Naive thymus-derived CD4-positive, alpha-beta T cell (primary cell): ENCODE measurements at regions of chr11 and their contacts with region 1.

Region 1: DNA sequence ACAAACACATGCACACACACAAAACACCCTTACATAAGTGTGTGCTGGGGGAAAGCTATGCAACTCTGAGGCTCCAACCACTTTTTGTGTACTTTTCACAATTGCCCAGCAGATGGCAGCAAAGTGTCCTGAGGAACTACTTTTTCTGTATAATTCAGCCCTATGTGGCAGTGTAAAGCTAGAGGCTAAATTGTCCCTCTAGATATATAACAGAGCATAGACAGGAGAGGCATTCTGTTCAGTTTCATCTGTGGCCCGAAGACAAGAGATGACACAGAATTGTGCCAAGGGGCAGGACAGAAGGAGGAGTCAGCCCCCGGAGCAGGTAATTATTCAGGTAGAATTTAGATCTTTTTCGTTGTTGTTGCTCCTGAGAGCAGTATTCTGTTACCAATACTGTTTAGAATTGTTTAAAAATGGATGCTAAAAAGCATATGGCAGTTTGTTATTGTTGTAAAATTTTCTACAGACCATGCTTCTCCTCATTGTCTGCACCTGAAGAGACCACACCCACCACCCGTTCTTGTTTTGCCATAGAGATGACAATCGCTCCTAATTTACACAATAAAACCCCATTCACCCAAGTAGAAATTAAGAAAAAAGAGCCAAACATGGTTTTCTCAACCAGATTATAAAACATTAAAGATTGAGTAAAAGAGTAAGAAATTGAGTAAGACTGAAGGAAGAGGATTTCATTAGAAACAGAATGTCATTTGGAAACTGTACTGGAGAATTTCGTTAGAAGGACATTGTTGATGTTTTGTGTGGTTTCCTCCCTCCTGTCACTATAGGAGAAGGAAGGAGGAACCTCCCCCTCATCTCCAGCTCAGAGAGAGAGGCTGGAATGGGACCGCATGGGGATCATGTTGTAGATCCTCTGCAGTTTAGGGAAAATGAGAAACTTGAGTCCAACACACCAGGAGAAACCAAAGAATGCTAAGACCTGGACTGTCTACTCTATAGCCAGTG is 14.5 kb upstream of the MS4A7 start:
- DNase-seq: peak in 8 of 9 donors; percentile 3 to 54 (median 41)
- ATAC-seq: peak; percentile 85
- H3K4me3 ChIP-seq: no peak overlapping the region
- H3K4me3 Mint-ChIP-seq: peak overlapping the region in 1 of 10 donors; percentile 4
- H3K27ac ChIP-seq: no peak overlapping the region
- H3K27ac Mint-ChIP-seq: no peak overlapping the region
- H3K4me1 ChIP-seq: no peaks in the 10 kb centered on the region
- H3K4me1 Mint-ChIP-seq: no peaks in the 10 kb centered on the region
- H3K27me3 ChIP-seq: no peaks in the 10 kb centered on the region
- H3K27me3 Mint-ChIP-seq: peaks cover 8 to 30% (median 23%) of the 10 kb centered on the region in 5 donors

Region 2: GRCh38 chr11:60348116-60348515 is 15.7 kb before region 1 on chr11:
- CTCF ChIA-PET with region 1: no interaction called
- POLR2A ChIA-PET with region 1: no interaction called
- intact Hi-C with region 1: no loop called
- DNase-seq: no peak
- ATAC-seq: no peak
- H3K4me3 ChIP-seq: no peak overlapping the region
- H3K4me3 Mint-ChIP-seq: no peak overlapping the region
- H3K27ac ChIP-seq: no peak overlapping the region
- H3K27ac Mint-ChIP-seq: no peak overlapping the region
- H3K4me1 ChIP-seq: no peaks in the 10 kb centered on the region
- H3K4me1 Mint-ChIP-seq: no peaks in the 10 kb centered on the region
- H3K27me3 ChIP-seq: no peaks in the 10 kb centered on the region
- H3K27me3 Mint-ChIP-seq: peaks cover 5 to 22% (median 15%) of the 10 kb centered on the region in 5 donors

Region 3: GRCh38 chr11:60485986-60486385 is 122.2 kb after region 1 on chr11:
- CTCF ChIA-PET with region 1: no interaction called
- POLR2A ChIA-PET with region 1: no interaction called
- intact Hi-C with region 1: loop called in 1 of 2 experiments (anchors 1 kb)
- DNase-seq: no peak
- ATAC-seq: peak; percentile 70
- H3K4me3 ChIP-seq: no peak overlapping the region
- H3K4me3 Mint-ChIP-seq: no peak overlapping the region
- H3K27ac ChIP-seq: no peak overlapping the region
- H3K27ac Mint-ChIP-seq: no peak overlapping the region
- H3K4me1 ChIP-seq: no peaks in the 10 kb centered on the region
- H3K4me1 Mint-ChIP-seq: peaks cover 0 to 8% (median 4%) of the 10 kb centered on the region in 7 donors
- H3K27me3 ChIP-seq: no peaks in the 10 kb centered on the region
- H3K27me3 Mint-ChIP-seq: peaks cover 0 to 13% (median 7%) of the 10 kb centered on the region in 5 donors

Region 4: DNA sequence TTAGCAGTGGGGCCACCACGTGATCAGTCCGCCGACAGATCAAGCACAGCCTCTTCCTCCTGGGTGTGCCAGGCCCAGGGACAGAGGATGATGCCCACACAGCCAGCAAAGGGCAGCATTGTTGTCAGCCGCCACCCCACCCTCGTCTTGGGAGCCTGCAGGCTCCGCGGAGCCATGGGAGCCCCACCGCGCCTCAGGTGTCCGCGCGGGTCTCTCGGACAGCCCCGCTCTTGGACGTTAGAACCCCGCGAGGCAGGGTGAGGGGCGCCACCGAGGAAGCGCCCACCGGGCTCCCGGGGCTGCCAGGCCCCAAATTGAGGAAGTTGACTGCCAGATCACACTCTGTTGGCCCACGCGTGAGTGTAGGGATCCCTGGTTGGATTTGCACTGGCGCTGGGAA is 251.7 kb after region 1 on chr11:
- CTCF ChIA-PET with region 1: interaction called, 4 read pairs
- POLR2A ChIA-PET with region 1: no interaction called
- intact Hi-C with region 1: loop called in 1 of 2 experiments (anchors 1 kb)
- DNase-seq: no peak
- ATAC-seq: no peak
- H3K4me3 ChIP-seq: no peak overlapping the region
- H3K4me3 Mint-ChIP-seq: no peak overlapping the region
- H3K27ac ChIP-seq: no peak overlapping the region
- H3K27ac Mint-ChIP-seq: no peak overlapping the region
- H3K4me1 ChIP-seq: no peaks in the 10 kb centered on the region
- H3K4me1 Mint-ChIP-seq: peaks cover 0 to 2% (median 0%) of the 10 kb centered on the region in 7 donors
- H3K27me3 ChIP-seq: no peaks in the 10 kb centered on the region
- H3K27me3 Mint-ChIP-seq: peaks cover 10 to 29% (median 17%) of the 10 kb centered on the region in 5 donors

Region 5: GRCh38 chr11:60634126-60634525 is 270.3 kb after region 1 on chr11:
- CTCF ChIA-PET with region 1: no interaction called
- POLR2A ChIA-PET with region 1: no interaction called
- intact Hi-C with region 1: loop called in 1 of 2 experiments (anchors 5 kb)
- DNase-seq: no peak
- ATAC-seq: no peak
- H3K4me3 ChIP-seq: no peak overlapping the region
- H3K4me3 Mint-ChIP-seq: no peak overlapping the region
- H3K27ac ChIP-seq: no peak overlapping the region
- H3K27ac Mint-ChIP-seq: no peak overlapping the region
- H3K4me1 ChIP-seq: no peaks in the 10 kb centered on the region
- H3K4me1 Mint-ChIP-seq: no peaks in the 10 kb centered on the region
- H3K27me3 ChIP-seq: no peaks in the 10 kb centered on the region
- H3K27me3 Mint-ChIP-seq: peaks cover 9 to 55% (median 26%) of the 10 kb centered on the region in 5 donors

Region 6: DNA sequence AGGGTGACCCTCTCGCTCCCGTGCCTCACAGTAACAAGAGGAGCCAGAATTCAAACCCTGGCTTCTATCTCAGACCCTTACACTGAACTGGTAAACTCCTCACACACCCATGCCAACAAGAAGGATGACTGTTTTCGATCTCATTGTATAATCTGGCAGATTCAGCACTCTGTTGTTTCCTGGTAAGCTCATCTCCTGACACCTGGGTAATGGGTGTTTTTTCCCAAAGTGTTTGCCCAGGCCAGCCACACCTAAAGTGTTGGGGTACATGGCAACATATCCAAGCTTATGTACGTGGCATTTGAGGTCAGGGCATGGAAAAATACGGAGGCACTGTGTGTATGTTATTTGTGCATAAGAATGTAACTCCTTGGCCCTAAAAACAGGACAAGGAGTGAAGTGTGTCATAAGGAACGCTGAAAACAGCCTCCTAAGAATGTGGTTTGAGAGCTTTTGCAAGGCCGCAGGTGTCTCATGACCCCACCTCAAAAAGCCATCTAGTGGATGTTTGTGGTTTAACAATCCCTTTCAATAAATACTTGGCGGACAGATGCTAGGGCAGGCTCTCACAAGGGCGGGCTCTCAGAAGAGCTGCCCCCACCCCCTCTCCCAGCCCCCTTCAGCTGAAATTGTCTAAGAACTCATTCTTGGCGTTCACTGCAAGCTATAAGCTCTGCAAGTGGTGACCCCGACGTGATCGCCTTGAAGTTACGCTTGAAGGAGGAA is 392.6 kb after region 1 on chr11 and contains the start of gene MS4A15:
- CTCF ChIA-PET with region 1: no interaction called
- POLR2A ChIA-PET with region 1: no interaction called
- intact Hi-C with region 1: loop called in 1 of 2 experiments (anchors 5 kb)
- DNase-seq: no peak
- ATAC-seq: no peak
- H3K4me3 ChIP-seq: no peak within 1 kb of the TSS
- H3K4me3 Mint-ChIP-seq: no peak within 1 kb of the TSS
- H3K27ac ChIP-seq: no peak within 1 kb of the TSS
- H3K27ac Mint-ChIP-seq: peak within 1 kb of the TSS in 1 of 9 donors; percentile 43
- H3K4me1 ChIP-seq: no peaks in the 10 kb centered on the region
- H3K4me1 Mint-ChIP-seq: peaks cover 0 to 5% (median 0%) of the 10 kb centered on the region in 7 donors
- H3K27me3 ChIP-seq: no peaks in the 10 kb centered on the region
- H3K27me3 Mint-ChIP-seq: peaks cover 37 to 53% (median 42%) of the 10 kb centered on the region in 5 donors
- total RNA-seq, gene MS4A15: not detected